CD8-positive, alpha-beta memory T cell (primary cell): ENCODE measurements at regions of chr12 and their contacts with region 1.

Region 1: DNA sequence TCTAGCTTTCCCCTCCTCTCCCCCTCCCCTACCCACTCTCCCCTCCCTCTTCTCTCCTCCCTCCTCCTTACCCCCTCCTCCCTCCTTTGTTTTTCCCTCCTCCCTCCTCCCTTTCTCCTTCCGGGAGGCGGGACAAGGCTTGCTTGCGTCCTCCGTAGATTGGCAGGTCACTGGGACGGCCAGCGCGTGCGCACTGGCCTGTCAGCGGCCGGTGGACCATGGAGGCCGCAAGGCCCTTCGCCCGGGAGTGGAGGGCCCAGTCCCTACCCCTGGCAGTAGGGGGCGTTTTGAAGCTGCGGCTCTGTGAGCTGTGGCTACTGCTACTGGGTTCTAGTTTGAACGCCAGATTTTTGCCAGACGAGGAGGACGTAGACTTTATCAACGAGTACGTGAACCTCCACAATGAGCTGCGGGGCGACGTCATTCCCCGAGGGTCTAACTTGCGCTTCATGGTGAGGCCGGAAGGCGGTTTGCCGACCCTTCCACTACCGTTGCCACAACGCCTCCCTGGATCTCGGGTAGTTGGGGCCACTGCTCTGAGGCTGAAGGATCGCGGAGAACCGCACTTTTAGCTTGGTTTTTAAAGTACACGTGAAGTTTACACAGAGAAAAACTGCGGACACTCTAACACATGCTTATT is at the start of gene GLIPR1L2:
- DNase-seq: peak; percentile 78 to 92 (median 83)
- H3K4me3 ChIP-seq: peak within 1 kb of the TSS; percentile 94
- H3K4me3 Mint-ChIP-seq: peak within 1 kb of the TSS; percentile 89 to 96 (median 95)
- H3K27ac ChIP-seq: peak within 1 kb of the TSS; percentile 83
- H3K27ac Mint-ChIP-seq: peak within 1 kb of the TSS; percentile 96 to 99 (median 98)
- H3K4me1 ChIP-seq: peaks cover 27% of the 10 kb centered on the region
- H3K4me1 Mint-ChIP-seq: peaks cover 48 to 74% (median 50%) of the 10 kb centered on the region in 3 donors
- H3K27me3 ChIP-seq: no peaks in the 10 kb centered on the region
- H3K27me3 Mint-ChIP-seq: no peaks in the 10 kb centered on the region
- total RNA-seq, gene GLIPR1L2: not detected

Region 2: GRCh38 chr12:75505706-75506312 is 114.8 kb after region 1 on chr12:
- CTCF ChIA-PET with region 1: interaction called, 10 read pairs
- POLR2A ChIA-PET with region 1: interaction called, 13 read pairs
- DNase-seq: no peak
- H3K4me3 ChIP-seq: no peak overlapping the region
- H3K4me3 Mint-ChIP-seq: no peak overlapping the region
- H3K27ac ChIP-seq: no peak overlapping the region
- H3K27ac Mint-ChIP-seq: peak overlapping the region in 7 of 8 donors; percentile 3 to 91 (median 44)
- H3K4me1 ChIP-seq: peaks cover 16% of the 10 kb centered on the region
- H3K4me1 Mint-ChIP-seq: peaks cover 24 to 38% (median 36%) of the 10 kb centered on the region in 3 donors
- H3K27me3 ChIP-seq: no peaks in the 10 kb centered on the region
- H3K27me3 Mint-ChIP-seq: no peaks in the 10 kb centered on the region

Region 3: GRCh38 chr12:75511116-75512048 is 120.4 kb after region 1 on chr12 and contains the start of gene KRR1:
- CTCF ChIA-PET with region 1: interaction called, 8 read pairs
- POLR2A ChIA-PET with region 1: interaction called, 13 read pairs
- DNase-seq: peak; percentile 76 to 93 (median 87)
- H3K4me3 ChIP-seq: peak within 1 kb of the TSS; percentile 74
- H3K4me3 Mint-ChIP-seq: peak within 1 kb of the TSS; percentile 92 to 100 (median 99)
- H3K27ac ChIP-seq: peak within 1 kb of the TSS; percentile 87
- H3K27ac Mint-ChIP-seq: peak within 1 kb of the TSS; percentile 87 to 100 (median 99)
- H3K4me1 ChIP-seq: peaks cover 21% of the 10 kb centered on the region
- H3K4me1 Mint-ChIP-seq: peaks cover 35 to 44% (median 42%) of the 10 kb centered on the region in 3 donors
- H3K27me3 ChIP-seq: no peaks in the 10 kb centered on the region
- H3K27me3 Mint-ChIP-seq: no peaks in the 10 kb centered on the region
- total RNA-seq, gene KRR1: 143 to 151 TPM